Activated naive CD4-positive, alpha-beta T cell treated with anti-CD3 and anti-CD28 coated beads for 36 hours (primary cell): ENCODE measurements at regions of chr16 and their contacts with region 1.

Region 1: DNA sequence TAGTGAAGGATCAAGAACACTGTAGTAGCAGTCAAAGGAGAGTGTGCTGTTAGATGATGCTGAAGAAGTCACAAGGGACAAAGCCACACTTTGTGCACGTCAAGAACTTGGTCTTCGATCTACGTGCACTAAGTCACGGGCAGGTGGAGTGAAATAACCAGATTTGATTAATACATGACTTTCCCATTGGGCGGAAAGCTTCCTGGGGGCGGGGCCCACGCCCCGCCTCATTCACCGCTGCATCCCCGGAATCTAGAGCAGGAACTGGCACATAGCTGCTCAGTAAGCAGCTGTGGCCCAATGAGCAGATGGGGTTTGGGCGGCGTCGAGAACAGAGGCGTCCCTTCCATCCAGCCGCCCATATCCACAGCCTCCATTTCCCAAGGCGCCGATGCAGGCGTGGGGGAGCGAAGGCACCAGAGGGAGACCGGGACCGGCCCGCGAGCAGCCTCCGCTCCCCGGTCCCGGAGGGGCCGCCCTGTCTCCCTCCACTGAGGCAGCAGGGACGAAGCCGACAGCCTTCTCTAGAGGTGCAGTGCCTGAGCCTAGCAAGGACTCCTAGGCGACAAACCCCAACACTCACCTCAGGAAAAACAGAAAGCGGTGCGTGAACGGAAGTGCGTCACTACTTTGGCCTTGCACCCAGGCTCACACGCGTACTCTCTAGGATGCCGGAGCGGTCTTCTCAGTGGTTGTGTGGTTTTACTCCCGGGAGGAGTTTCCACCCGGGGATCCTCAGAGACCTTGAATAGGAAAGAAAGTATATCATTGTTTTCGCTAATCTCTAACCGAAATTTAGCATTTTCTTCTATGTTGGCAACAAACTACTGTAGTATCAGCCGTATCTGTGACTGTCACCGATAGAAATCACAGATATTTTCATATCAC is 4.9 kb downstream of the ZNF19 start:
- DNase-seq: peak; percentile 90
- H3K4me3 Mint-ChIP-seq: peak overlapping the region; percentile 74
- H3K27ac Mint-ChIP-seq: peak overlapping the region; percentile 79
- H3K4me1 Mint-ChIP-seq: peaks cover 13% of the 10 kb centered on the region
- H3K27me3 Mint-ChIP-seq: no peaks in the 10 kb centered on the region

Region 2: GRCh38 chr16:70800781-70801530 is 683.3 kb before region 1 on chr16 and contains the start of gene VAC14:
- CTCF ChIA-PET with region 1: no interaction called
- intact Hi-C with region 1: loop called (anchors 5 kb)
- DNase-seq: peak; percentile 98
- H3K4me3 Mint-ChIP-seq: peak within 1 kb of the TSS; percentile 88
- H3K27ac Mint-ChIP-seq: peak within 1 kb of the TSS; percentile 32
- H3K4me1 Mint-ChIP-seq: peaks cover 19% of the 10 kb centered on the region
- H3K27me3 Mint-ChIP-seq: no peaks in the 10 kb centered on the region
- total RNA-seq, gene VAC14: 19.6 to 20.6 TPM

Region 3: DNA sequence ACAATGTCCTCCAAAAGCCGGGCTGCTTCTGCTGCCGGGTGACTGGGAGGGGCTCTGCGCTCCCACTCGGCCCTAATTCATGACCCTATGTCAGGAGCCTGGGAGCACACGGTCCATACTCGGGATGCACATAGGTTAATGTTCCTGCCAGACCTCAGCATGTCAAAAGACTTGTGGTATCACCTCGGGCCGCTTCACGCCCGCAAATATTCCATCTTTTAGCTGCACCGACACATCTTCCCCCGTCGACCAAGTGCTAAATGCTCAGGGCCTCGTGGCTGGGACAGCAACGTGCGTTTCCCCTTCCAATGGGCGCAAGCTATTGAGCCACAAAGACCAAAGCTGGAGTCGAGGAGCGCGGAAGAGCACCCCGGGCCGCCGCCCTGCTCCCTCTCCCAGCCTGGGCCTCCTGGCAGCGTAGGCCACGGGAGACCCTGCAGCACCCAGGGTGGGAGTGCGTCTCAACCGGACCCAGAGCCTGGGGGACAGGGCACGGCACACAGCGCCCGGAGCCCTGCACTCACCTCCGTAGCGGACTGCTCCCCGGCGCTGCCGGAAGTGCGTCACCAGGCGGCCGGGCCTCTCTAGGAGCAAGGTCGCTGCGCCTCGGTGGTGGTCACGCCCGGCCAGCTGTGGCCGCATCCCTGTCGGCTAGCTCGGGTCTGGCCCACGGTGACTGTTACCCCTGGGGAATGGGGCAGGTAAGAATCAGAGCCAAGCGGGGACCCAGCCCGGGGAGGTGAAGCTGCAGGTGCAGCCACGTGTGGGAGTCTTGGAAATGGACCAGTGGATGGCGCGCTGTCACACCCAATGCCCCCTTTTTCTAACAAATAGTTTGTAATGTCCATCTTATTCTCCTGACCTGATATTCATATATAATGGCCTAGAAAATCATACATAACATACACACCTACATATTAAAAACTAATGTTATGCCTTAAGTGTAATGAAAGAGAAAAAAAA is 22.3 kb before region 1 on chr16 and contains the start of gene ZNF23:
- CTCF ChIA-PET with region 1: interaction called, 5 read pairs
- intact Hi-C with region 1: loop called (anchors 1 kb)
- DNase-seq: peak; percentile 78
- H3K4me3 Mint-ChIP-seq: peak within 1 kb of the TSS; percentile 89
- H3K27ac Mint-ChIP-seq: peak within 1 kb of the TSS; percentile 91
- H3K4me1 Mint-ChIP-seq: peaks cover 18% of the 10 kb centered on the region
- H3K27me3 Mint-ChIP-seq: no peaks in the 10 kb centered on the region
- total RNA-seq, gene ZNF23: 6.9 to 7.1 TPM

Region 4: GRCh38 chr16:71564155-71564967 is 80.1 kb after region 1 on chr16:
- CTCF ChIA-PET with region 1: no interaction called
- intact Hi-C with region 1: no loop called
- DNase-seq: no peak
- H3K4me3 Mint-ChIP-seq: peak overlapping the region; percentile 80
- H3K27ac Mint-ChIP-seq: peak overlapping the region; percentile 88
- H3K4me1 Mint-ChIP-seq: peaks cover 15% of the 10 kb centered on the region
- H3K27me3 Mint-ChIP-seq: no peaks in the 10 kb centered on the region

Region 5: GRCh38 chr16:71723537-71724319 is 239.5 kb after region 1 on chr16:
- CTCF ChIA-PET with region 1: no interaction called
- intact Hi-C with region 1: loop called (anchors 2 kb)
- DNase-seq: peak; percentile 74
- H3K4me3 Mint-ChIP-seq: peak overlapping the region; percentile 80
- H3K27ac Mint-ChIP-seq: no peak overlapping the region
- H3K4me1 Mint-ChIP-seq: peaks cover 18% of the 10 kb centered on the region
- H3K27me3 Mint-ChIP-seq: peaks cover 6% of the 10 kb centered on the region

Region 6: GRCh38 chr16:71894921-71895678 is 410.9 kb after region 1 on chr16 and contains the start of gene IST1:
- CTCF ChIA-PET with region 1: no interaction called
- intact Hi-C with region 1: loop called (anchors 10 kb)
- DNase-seq: peak; percentile 99
- H3K4me3 Mint-ChIP-seq: peak within 1 kb of the TSS; percentile 97
- H3K27ac Mint-ChIP-seq: peak within 1 kb of the TSS; percentile 96
- H3K4me1 Mint-ChIP-seq: peaks cover 33% of the 10 kb centered on the region
- H3K27me3 Mint-ChIP-seq: no peaks in the 10 kb centered on the region
- total RNA-seq, gene IST1: 196 to 203 TPM